ENCODE measurements at regions of chr4 and their contacts with region 1.

Region 1: GRCh38 chr4:33116871-33117270 is 2396.7 kb downstream of the PCDH7 start:
- DNase-seq: no peak
- H3K4me3 ChIP-seq: no peak overlapping the region
- H3K27ac ChIP-seq: no peak overlapping the region
- H3K4me1 ChIP-seq: no peaks in the 10 kb centered on the region
- H3K27me3 ChIP-seq: no peaks in the 10 kb centered on the region
- CTCF ChIP-seq: no peak
- POLR2A ChIP-seq: no peak

Region 2: DNA sequence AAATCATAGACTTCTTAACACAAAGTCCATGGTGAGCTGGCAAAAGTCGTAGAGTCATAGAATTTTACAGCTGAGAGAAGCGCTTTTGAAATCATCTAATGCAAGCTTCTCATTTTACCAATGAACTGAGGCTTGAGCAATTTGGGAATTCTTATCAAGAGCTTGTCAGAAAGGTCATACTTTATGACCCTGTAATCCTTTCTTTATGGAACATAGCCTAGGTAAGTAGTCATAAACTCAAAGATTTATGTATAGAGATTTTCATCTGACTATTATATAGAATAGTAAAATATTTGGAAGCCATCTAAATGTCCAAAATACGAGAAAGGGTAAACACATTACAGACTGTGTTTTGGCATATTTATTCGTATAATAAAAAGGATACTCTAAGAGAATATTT is 1833.2 kb before region 1 on chr4:
- intact Hi-C with region 1: no loop called
- DNase-seq: no peak
- H3K4me3 ChIP-seq: no peak overlapping the region
- H3K27ac ChIP-seq: no peak overlapping the region
- H3K4me1 ChIP-seq: no peaks in the 10 kb centered on the region
- H3K27me3 ChIP-seq: no peaks in the 10 kb centered on the region
- CTCF ChIP-seq: no peak
- POLR2A ChIP-seq: no peak

Region 3: DNA sequence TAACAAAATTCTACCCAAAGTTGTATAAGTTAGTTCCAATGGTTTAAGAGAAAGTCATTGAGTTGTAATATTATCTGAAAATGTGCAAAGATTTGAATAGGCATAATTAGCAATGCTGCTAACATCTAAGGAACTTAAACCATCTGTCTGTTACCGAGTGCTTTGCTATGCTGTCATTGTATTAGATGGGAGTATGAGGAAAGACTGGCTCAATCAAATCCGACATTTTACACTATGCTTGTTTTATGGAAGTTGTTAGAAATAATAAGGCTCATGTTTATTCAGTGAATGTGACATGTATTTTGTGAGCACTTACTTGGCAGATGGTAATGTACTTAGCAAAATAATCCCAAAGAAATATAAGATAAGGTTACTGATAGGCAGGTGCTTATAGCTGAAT is 681.6 kb before region 1 on chr4:
- intact Hi-C with region 1: loop called (anchors 5 kb)
- DNase-seq: no peak
- H3K4me3 ChIP-seq: no peak overlapping the region
- H3K27ac ChIP-seq: no peak overlapping the region
- H3K4me1 ChIP-seq: no peaks in the 10 kb centered on the region
- H3K27me3 ChIP-seq: no peaks in the 10 kb centered on the region
- CTCF ChIP-seq: no peak
- POLR2A ChIP-seq: no peak

Region 4: DNA sequence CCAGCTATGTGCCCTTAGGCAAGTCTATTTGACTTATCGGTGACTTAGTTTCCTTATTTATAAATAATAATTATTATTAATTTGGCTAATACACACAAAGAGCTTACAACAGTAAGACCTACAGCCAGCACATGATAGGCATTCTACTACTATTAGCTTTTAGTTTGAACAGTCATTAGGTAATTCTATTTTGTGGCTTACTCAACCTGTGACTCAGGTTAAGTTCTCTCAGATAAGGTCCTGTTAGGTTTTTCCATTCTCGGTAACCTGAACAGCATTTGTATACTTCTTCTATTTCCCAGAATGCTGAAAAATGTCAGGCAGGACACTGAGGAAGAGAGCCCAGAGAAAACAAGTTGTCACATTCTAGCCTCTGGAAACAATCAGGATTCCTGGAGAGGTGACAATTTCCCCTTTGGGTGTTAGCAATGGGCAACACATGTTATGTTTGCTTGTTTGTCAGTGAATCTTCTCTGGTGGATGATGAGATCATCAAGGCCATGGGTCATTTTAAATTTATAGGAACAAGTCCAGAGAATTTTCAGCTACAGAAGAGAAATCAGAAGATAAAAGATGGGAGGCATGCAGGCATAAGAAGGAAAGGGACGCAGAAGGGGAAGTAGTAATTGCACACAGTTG is 252.0 kb before region 1 on chr4:
- intact Hi-C with region 1: no loop called
- DNase-seq: no peak
- H3K4me3 ChIP-seq: no peak overlapping the region
- H3K27ac ChIP-seq: no peak overlapping the region
- H3K4me1 ChIP-seq: no peaks in the 10 kb centered on the region
- H3K27me3 ChIP-seq: no peaks in the 10 kb centered on the region
- CTCF ChIP-seq: no peak
- POLR2A ChIP-seq: no peak

Measured in breast epithelium (tissue), 4 donors.